ENCODE measurements at regions of chr1 and their contacts with region 1.

Region 1: DNA sequence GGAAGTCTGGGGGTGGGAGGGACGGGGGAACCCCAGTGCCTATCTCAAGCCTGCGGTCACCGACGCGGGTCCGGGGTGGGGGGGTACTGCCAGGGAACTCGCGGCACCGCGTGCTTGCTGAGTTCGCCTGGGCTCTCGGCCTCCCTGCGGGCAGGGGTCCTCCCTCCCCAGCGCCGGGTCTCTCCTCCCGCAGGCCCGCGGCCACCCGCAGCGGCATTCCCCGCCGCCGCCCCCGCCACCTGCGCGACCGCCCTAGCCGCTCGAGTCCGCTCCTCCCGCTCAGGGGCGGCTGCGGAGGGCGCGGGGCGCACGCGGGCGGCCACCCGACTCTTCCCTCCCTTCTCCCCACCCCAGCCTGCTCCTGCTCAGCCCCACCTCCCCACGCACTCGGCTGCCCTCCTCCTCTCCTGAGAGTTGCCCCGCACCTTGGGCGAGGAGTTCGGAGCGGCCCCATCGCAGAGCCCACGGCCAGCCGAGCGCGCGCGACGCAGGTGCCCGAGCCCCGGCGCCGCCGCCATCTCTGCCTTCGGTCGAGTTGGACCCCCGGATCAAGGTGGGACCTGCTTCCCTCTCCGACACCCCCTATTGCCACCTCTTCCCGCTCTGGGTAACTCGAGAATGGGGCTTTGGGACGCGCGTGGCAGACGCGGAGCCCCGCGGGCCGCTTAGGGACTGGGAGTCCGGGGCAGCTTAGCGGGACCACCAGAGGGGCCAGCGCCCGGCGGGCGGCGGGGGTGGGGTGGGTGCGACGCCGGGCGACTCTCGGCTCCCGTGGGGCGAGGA is 105.0 kb downstream of the LEPR start:
- DNase-seq: peak in 1 of 2 donors; percentile 21
- ATAC-seq: peak in 7 of 8 donors; percentile 33 to 64 (median 46)
- H3K4me3 ChIP-seq: peak overlapping the region; percentile 53 to 70 (median 60)
- H3K27ac ChIP-seq: peak overlapping the region in 6 of 10 donors; percentile 42 to 51 (median 46)
- H3K4me1 ChIP-seq: peaks cover 0 to 35% (median 13%) of the 10 kb centered on the region in 9 donors
- H3K27me3 ChIP-seq: peaks cover 0 to 46% (median 21%) of the 10 kb centered on the region in 7 donors
- CTCF ChIP-seq: no peak

Region 2: GRCh38 chr1:65059930-65060538 is 465.4 kb before region 1 on chr1:
- intact Hi-C with region 1: no loop called
- DNase-seq: no peak
- ATAC-seq: peak in 3 of 8 donors; percentile 25 to 55 (median 34)
- H3K4me3 ChIP-seq: no peak overlapping the region
- H3K27ac ChIP-seq: peak overlapping the region in 4 of 10 donors; percentile 1 to 34 (median 4)
- H3K4me1 ChIP-seq: peaks cover 16 to 94% (median 76%) of the 10 kb centered on the region in 9 donors
- H3K27me3 ChIP-seq: no peaks in the 10 kb centered on the region
- CTCF ChIP-seq: peak; percentile 25 to 78 (median 67)

Region 3: DNA sequence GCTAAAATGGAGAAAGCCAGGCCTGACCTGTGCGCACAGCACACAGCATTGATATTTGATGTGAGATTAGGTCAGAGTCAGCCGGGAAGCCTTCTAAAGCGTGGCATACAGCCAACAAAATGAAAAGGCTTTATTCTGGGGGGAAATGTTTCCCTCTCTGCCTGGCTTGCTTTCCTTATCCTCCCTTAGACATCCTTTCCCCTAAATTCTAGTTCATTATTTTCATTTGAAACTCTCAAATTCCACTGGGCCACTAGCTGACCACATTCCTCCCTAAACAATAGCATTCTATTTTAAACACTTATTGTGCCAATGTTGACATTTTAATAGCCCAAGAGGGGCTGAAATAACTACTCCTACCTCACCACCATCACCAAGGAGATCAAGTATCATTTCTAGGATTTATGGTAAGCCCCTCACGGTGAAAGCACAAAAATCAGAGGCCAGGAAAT is 55.5 kb before region 1 on chr1:
- intact Hi-C with region 1: loop called in 1 of 10 experiments (anchors 10 kb)
- DNase-seq: peak in 1 of 2 donors; percentile 28
- ATAC-seq: peak in 7 of 8 donors; percentile 51 to 88 (median 68)
- H3K4me3 ChIP-seq: no peak overlapping the region
- H3K27ac ChIP-seq: peak overlapping the region in 8 of 10 donors; percentile 5 to 80 (median 52)
- H3K4me1 ChIP-seq: peaks cover 0 to 40% (median 19%) of the 10 kb centered on the region in 9 donors
- H3K27me3 ChIP-seq: no peaks in the 10 kb centered on the region
- CTCF ChIP-seq: no peak

Measured in heart right ventricle (tissue), 16 donors.